CD4-positive, alpha-beta T cell (primary cell): ENCODE measurements at regions of chr1 and their contacts with region 1.

Region 1: DNA sequence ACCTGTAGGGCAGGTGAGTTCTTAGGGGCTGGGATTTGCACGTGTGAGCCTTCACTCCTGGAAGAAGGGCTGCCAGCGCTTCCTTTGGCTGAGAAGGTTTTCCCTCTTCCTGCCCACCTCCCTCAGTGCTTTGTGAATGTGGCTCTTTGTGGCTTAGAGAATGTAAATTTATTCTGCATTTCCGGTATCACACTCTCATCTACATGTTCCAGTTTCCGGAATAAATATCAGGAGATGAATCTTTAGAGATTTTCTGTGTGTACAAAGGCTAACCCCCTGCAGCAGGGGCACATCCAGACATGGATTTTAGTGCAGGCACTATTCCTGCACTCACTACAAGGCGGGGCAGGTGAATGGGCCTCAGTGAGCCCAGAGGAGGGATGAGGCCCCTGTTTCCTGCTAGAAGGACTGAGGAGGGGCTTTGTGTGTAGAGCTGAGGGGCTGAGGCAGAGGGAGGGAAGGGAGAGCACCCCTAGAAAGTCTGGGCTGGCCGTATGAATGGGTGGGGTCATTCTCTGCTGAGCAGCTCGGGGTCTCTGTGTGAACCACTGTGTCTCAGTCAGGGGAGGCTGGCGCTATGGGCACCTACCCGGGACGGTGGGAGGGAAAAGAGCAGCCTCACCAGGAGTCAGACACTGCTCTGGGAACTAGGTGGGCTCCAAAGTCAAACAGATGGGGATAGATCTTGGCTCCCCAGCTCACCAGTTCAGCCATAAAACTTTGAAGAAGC is 207.5 kb downstream of the MATN1 start:
- DNase-seq: no peak
- ATAC-seq: no peak
- H3K4me3 ChIP-seq: no peak overlapping the region
- H3K4me3 Mint-ChIP-seq: no peak overlapping the region
- H3K27ac ChIP-seq: no peak overlapping the region
- H3K27ac Mint-ChIP-seq: no peak overlapping the region
- H3K4me1 ChIP-seq: no peaks in the 10 kb centered on the region
- H3K4me1 Mint-ChIP-seq: no peaks in the 10 kb centered on the region
- H3K27me3 ChIP-seq: peaks cover 0 to 2% of the 10 kb centered on the region in 2 experiments
- H3K27me3 Mint-ChIP-seq: peaks cover 22% of the 10 kb centered on the region
- CTCF ChIP-seq: no peak

Region 2: GRCh38 chr1:29849038-29849750 is 666.7 kb before region 1 on chr1:
- CTCF ChIA-PET with region 1: no interaction called
- POLR2A ChIA-PET with region 1: no interaction called
- intact Hi-C with region 1: loop called in 1 of 2 experiments (anchors 5 kb)
- DNase-seq: peak in 11 of 14 experiments; percentile 2 to 58 (median 27)
- ATAC-seq: no peak
- H3K4me3 ChIP-seq: no peak overlapping the region
- H3K4me3 Mint-ChIP-seq: no peak overlapping the region
- H3K27ac ChIP-seq: no peak overlapping the region
- H3K27ac Mint-ChIP-seq: no peak overlapping the region
- H3K4me1 ChIP-seq: no peaks in the 10 kb centered on the region
- H3K4me1 Mint-ChIP-seq: no peaks in the 10 kb centered on the region
- H3K27me3 ChIP-seq: peaks cover 9% of the 10 kb centered on the region in 2 experiments
- H3K27me3 Mint-ChIP-seq: peaks cover 22% of the 10 kb centered on the region
- CTCF ChIP-seq: no peak